Common myeloid progenitor, CD34-positive (primary cell): ENCODE measurements at regions of chr7 and their contacts with region 1.

Region 1: DNA sequence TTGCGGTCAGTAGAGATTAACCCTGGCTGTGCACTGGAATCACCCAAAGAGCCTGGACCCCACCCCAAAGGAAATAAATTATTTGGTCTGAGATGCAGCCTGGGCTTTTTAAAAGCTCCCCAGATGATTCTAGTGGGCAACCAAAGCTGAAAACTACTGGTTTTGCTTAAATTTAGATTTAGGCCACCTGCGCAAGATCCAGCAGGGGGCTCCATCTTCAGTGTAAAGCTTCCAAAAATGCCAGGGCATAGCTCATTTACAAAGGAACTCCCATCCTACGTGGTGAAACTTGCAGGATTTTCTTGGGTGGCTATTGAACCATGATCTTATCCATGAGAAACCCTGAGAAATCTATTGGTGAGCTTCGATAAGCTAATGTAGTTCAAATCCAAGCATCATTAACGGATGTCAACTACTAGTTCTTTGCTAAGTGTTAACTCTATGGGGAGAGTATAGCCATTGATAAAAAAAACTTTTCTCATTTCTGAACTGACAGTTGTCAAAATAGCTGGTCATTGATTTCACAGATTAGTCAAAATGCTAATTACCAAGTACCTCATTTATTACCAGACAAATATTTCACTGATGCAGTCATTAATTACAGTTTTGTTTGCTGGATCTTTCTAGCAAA is 315.3 kb downstream of the LHFPL3 start:
- DNase-seq: peak; percentile 20 to 50 (median 42)
- H3K4me3 ChIP-seq: no peak overlapping the region
- H3K27ac ChIP-seq: no peak overlapping the region
- H3K4me1 ChIP-seq: no peaks in the 10 kb centered on the region
- H3K27me3 ChIP-seq: peaks cover 0 to 4% (median 0%) of the 10 kb centered on the region in 5 experiments

Region 2: DNA sequence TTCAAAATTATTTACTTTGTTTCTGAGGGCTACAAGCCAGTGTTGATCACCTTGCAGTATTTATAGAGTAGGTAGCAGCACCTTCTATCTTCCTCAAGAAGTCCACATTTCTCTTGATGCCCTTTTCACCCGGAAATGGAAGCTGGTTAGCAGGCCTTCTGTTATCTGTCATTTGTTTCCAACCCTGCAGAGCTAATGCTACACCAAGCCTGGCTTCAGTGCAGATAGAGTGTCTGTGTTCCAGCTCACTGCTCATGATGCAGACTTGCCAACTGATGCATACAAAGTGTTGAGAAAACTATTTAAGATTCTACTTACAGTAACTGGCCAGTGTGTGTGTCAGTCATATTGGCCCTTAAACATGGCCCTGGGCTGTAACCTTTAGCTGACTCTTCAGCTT is 14.3 kb before region 1 on chr7:
- CTCF ChIA-PET with region 1: interaction called, 11 read pairs
- POLR2A ChIA-PET with region 1: no interaction called
- DNase-seq: no peak
- H3K4me3 ChIP-seq: no peak overlapping the region
- H3K27ac ChIP-seq: no peak overlapping the region
- H3K4me1 ChIP-seq: no peaks in the 10 kb centered on the region
- H3K27me3 ChIP-seq: peaks cover 0 to 5% (median 0%) of the 10 kb centered on the region in 5 experiments

Region 3: DNA sequence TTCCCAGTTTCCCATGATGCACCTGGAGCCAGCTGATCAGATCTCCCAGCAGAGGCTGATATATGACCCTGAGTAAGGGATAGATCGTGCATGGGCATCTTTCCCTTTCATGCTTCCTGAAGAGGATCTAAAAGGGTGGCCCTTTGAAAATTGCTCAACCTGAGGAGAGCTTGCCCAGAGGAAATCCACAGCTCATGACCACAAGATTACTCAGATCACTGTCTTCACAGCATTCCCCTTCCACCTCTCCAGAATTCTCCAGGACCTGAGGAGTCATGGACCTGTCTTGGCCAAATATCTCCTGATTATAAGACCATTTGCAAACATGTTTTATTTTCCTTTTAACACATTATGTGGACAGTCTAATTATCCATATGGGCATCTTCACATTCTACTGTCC is 12.8 kb after region 1 on chr7:
- CTCF ChIA-PET with region 1: interaction called, 14 read pairs
- POLR2A ChIA-PET with region 1: no interaction called
- DNase-seq: no peak
- H3K4me3 ChIP-seq: no peak overlapping the region
- H3K27ac ChIP-seq: no peak overlapping the region
- H3K4me1 ChIP-seq: no peaks in the 10 kb centered on the region
- H3K27me3 ChIP-seq: peaks cover 0 to 9% (median 8%) of the 10 kb centered on the region in 5 experiments